ENCODE measurements at regions of chr12 and their contacts with region 1.

Region 1: DNA sequence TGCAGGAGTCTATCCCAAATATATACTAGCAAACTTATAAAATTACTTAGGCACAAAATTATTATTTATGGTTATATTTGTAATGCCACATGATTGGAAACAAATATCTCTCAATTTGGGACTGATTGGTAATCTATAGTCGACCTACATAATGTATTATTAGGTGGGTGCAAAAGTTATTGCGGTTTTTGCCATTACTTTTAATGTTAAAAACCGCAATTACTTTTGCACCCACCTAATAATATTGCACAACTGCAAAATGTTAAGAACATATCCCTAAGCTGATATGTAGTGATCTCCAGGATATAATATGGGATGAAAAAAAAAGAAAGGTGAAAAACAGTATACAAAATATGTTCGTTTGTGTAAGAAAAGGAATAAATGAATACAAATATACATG is 81.9 kb upstream of the SYT1 start:
- DNase-seq: no peak
- ATAC-seq: no peak
- H3K4me3 ChIP-seq: no peak overlapping the region
- H3K4me3 Mint-ChIP-seq: no peak overlapping the region
- H3K27ac ChIP-seq: no peak overlapping the region
- H3K27ac Mint-ChIP-seq: no peak overlapping the region
- H3K4me1 ChIP-seq: no peaks in the 10 kb centered on the region
- H3K4me1 Mint-ChIP-seq: no peaks in the 10 kb centered on the region
- H3K27me3 ChIP-seq: no peaks in the 10 kb centered on the region
- H3K27me3 Mint-ChIP-seq: no peaks in the 10 kb centered on the region
- CTCF ChIP-seq: no peak

Region 2: DNA sequence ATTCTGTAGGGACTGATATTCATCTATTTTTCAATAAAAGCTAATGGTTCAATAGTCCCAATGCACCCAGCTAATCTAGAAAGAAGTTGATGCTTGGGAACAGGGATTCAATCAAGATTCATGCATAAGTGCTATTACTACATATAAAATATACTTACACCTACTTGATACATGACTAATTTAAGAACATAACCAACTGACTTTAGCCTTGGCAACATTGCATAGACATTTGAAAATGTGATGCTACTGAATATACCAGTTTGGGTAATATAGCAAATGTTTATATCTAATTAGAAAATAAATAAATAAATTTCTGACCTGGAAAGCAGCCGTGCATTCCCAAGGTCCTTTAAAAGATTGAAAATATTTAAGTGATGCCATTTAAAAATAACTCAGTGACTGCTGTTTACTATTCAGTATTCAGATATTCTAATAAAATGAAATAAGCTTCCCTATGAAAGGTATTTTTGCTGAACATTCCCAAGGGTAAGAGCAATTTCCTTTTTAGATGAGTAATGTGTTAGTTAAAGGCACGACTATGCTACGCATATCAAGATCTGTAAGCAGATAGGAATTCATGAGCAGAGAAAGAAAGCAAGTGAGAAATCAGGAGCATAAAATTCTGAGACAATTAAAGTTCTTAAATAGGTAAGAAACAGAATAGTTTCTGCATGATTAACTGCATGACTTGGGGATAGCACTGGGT is 78.7 kb before region 1 on chr12:
- CTCF ChIA-PET with region 1: no interaction called
- POLR2A ChIA-PET with region 1: no interaction called
- intact Hi-C with region 1: loop called in 1 of 2 experiments (anchors 5 kb)
- DNase-seq: no peak
- ATAC-seq: no peak
- H3K4me3 ChIP-seq: no peak overlapping the region
- H3K4me3 Mint-ChIP-seq: no peak overlapping the region
- H3K27ac ChIP-seq: no peak overlapping the region
- H3K27ac Mint-ChIP-seq: no peak overlapping the region
- H3K4me1 ChIP-seq: no peaks in the 10 kb centered on the region
- H3K4me1 Mint-ChIP-seq: no peaks in the 10 kb centered on the region
- H3K27me3 ChIP-seq: no peaks in the 10 kb centered on the region
- H3K27me3 Mint-ChIP-seq: no peaks in the 10 kb centered on the region
- CTCF ChIP-seq: no peak

Measured in CD8-positive, alpha-beta T cell (primary cell).